ENCODE measurements at regions of chr2 and their contacts with region 1.

Region 1: DNA sequence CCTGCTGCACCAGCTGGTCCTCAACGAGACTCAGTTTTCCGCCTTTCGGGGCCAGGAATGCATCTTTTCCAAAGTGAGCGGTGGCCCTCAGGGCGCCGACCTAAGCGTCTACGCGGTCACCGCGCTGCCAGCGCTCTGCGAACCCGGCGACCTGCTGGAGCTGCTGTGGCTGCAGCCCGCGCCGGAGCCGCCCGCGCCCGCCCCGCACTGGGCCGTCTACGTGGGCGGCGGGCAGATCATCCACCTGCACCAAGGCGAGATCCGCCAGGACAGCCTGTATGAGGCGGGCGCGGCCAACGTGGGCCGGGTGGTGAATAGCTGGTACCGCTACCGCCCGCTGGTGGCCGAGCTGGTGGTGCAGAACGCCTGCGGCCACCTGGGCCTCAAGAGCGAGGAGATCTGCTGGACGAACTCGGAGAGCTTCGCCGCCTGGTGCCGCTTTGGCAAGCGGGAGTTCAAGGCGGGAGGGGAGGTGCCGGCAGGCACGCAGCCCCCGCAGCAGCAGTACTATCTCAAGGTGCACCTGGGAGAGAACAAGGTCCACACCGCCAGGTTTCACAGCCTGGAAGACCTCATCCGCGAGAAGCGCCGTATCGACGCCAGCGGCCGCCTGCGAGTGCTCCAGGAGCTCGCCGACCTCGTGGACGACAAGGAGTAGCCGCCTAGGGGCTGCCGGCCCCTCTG is 1.8 kb downstream of the LRATD1 start:
- DNase-seq: peak; percentile 91
- H3K4me3 Mint-ChIP-seq: peak overlapping the region; percentile 87
- H3K27ac Mint-ChIP-seq: peak overlapping the region; percentile 64
- H3K4me1 Mint-ChIP-seq: peaks cover 22% of the 10 kb centered on the region
- H3K27me3 Mint-ChIP-seq: no peaks in the 10 kb centered on the region
- CTCF ChIP-seq: peak; percentile 60

Region 2: DNA sequence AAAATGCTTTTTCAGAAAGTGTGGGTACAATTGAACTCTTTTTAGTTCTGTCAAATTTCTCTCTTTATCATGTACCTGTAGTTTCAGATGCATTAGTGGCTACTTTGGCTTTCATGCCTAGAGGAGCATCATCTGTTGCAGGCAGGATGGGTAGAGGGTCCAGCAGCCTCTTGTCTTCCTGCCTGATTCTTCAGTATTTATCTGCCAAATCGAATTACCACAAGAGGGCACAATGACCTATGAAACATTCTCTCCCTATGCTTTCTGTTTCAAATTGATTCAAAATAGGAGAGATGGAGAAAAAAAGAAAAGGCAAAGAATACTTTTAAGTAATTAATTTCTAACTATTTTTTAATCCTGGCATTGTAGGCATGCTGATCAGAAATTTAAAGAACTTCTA is 1440.4 kb before region 1 on chr2:
- CTCF ChIA-PET with region 1: no interaction called
- intact Hi-C with region 1: loop called (anchors 5 kb)
- DNase-seq: peak; percentile 10
- H3K4me3 Mint-ChIP-seq: no peak overlapping the region
- H3K27ac Mint-ChIP-seq: no peak overlapping the region
- H3K4me1 Mint-ChIP-seq: no peaks in the 10 kb centered on the region
- H3K27me3 Mint-ChIP-seq: no peaks in the 10 kb centered on the region
- CTCF ChIP-seq: peak; percentile 33

Region 3: GRCh38 chr2:14288016-14288415 is 346.3 kb before region 1 on chr2:
- CTCF ChIA-PET with region 1: interaction called, 4 read pairs
- intact Hi-C with region 1: loop called (anchors 2 kb)
- DNase-seq: peak; percentile 73
- H3K4me3 Mint-ChIP-seq: no peak overlapping the region
- H3K27ac Mint-ChIP-seq: peak overlapping the region; percentile 42
- H3K4me1 Mint-ChIP-seq: peaks cover 28% of the 10 kb centered on the region
- H3K27me3 Mint-ChIP-seq: no peaks in the 10 kb centered on the region
- CTCF ChIP-seq: no peak

Region 4: GRCh38 chr2:14907014-14907609 is 272.8 kb after region 1 on chr2:
- CTCF ChIA-PET with region 1: no interaction called
- intact Hi-C with region 1: loop called (anchors 5 kb)
- DNase-seq: peak; percentile 6
- H3K4me3 Mint-ChIP-seq: no peak overlapping the region
- H3K27ac Mint-ChIP-seq: no peak overlapping the region
- H3K4me1 Mint-ChIP-seq: no peaks in the 10 kb centered on the region
- H3K27me3 Mint-ChIP-seq: no peaks in the 10 kb centered on the region
- CTCF ChIP-seq: peak; percentile 39